Common myeloid progenitor, CD34-positive (primary cell): ENCODE measurements at regions of chr7 and their contacts with region 1.

Region 1: GRCh38 chr7:86991771-86992191 is 67.7 kb downstream of the ELAPOR2 start:
- DNase-seq: peak; percentile 12 to 68 (median 47)
- H3K4me3 ChIP-seq: peak overlapping the region in 1 of 7 experiments; percentile 15
- H3K27ac ChIP-seq: no peak overlapping the region
- H3K4me1 ChIP-seq: peaks cover 0 to 5% (median 4%) of the 10 kb centered on the region in 4 experiments
- H3K27me3 ChIP-seq: no peaks in the 10 kb centered on the region

Region 2: DNA sequence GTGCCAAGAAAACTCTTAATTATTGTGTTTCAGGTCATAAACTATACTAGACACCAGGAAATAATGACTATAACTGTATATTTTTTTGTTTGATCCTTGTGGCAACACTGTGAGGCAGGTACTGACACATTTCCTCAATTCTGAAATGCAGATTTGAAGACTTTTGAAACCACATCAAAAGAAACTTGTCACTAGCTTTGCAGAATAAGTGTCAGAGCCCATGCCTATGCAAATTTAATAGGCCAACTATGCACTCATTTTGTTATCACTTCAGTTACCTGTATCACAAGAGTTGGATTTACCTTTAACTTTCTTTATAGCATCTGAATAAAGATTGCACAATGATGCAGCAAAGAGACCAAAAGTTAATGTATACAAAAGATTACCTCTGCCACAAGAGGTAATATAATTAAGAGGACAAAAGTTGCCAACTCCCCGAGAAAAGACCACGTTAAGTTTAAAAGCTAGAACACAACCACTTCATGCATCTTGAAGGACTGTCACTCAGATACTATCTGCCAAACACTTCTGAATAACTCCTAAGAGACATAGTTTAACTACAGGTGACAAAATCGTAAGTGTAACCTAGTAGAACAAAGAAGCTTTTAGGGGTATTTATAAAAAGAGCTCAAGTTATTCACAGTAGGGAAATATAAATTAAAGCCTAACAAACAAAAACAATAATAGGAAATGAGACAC is 12.8 kb before region 1 on chr7:
- CTCF ChIA-PET with region 1: interaction called, 10 read pairs
- POLR2A ChIA-PET with region 1: no interaction called
- DNase-seq: peak in 2 of 3 donors; percentile 41 to 74
- H3K4me3 ChIP-seq: no peak overlapping the region
- H3K27ac ChIP-seq: no peak overlapping the region
- H3K4me1 ChIP-seq: peaks cover 0 to 7% (median 5%) of the 10 kb centered on the region in 4 experiments
- H3K27me3 ChIP-seq: no peaks in the 10 kb centered on the region